CD14-positive monocyte (primary cell): ENCODE measurements at regions of chr18 and their contacts with region 1.

Region 1: GRCh38 chr18:35143622-35144596 is 96.9 kb upstream of the ZNF397 start:
- DNase-seq: peak in 2 of 3 donors; percentile 25 to 26
- H3K4me3 ChIP-seq: no peak overlapping the region
- H3K4me3 Mint-ChIP-seq: no peak overlapping the region
- H3K27ac ChIP-seq: no peak overlapping the region
- H3K27ac Mint-ChIP-seq: no peak overlapping the region
- H3K4me1 ChIP-seq: peaks cover 3 to 4% of the 10 kb centered on the region in 2 donors
- H3K4me1 Mint-ChIP-seq: peaks cover 11% of the 10 kb centered on the region
- H3K27me3 ChIP-seq: no peaks in the 10 kb centered on the region
- H3K27me3 Mint-ChIP-seq: no peaks in the 10 kb centered on the region
- CTCF ChIP-seq: peak; percentile 50

Region 2: DNA sequence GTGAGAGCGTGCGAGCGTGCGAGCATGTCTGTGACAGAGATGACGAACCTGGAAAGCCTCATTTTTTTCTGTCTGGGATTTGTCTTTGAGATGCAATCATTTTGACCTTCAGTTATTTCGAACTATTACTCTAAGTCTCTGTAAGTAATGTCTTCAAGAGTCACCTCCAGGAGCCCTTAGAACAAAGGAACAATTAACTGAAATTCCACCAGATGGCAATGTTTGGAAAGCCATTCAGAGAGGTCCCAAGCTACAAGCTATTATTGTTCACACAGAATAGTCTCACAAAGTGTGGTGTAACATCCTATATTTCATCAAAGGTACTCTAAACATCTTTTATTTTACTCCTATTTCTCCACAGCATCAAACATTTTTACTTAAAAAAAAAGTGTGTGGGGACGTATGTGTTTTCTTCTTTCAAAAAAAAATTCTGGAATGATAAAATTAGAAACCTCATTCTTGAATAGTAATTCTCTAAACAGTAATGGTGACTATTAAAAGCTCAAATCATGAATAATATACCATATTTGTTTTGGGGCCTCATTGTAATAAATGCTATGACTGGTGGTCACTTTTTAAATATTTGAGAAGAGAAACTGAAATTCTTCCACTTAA is 137.8 kb before region 1 on chr18:
- intact Hi-C with region 1: loop called (anchors 2 to 10 kb)
- DNase-seq: peak; percentile 37 to 68 (median 58)
- H3K4me3 ChIP-seq: no peak overlapping the region
- H3K4me3 Mint-ChIP-seq: no peak overlapping the region
- H3K27ac ChIP-seq: no peak overlapping the region
- H3K27ac Mint-ChIP-seq: no peak overlapping the region
- H3K4me1 ChIP-seq: no peaks in the 10 kb centered on the region
- H3K4me1 Mint-ChIP-seq: peaks cover 1% of the 10 kb centered on the region
- H3K27me3 ChIP-seq: no peaks in the 10 kb centered on the region
- H3K27me3 Mint-ChIP-seq: no peaks in the 10 kb centered on the region
- CTCF ChIP-seq: peak; percentile 77

Region 3: GRCh38 chr18:35231052-35231451 is 87.1 kb after region 1 on chr18:
- intact Hi-C with region 1: no loop called
- DNase-seq: peak; percentile 75 to 80 (median 79)
- H3K4me3 ChIP-seq: peak overlapping the region in 1 of 3 experiments; percentile 35
- H3K4me3 Mint-ChIP-seq: peak overlapping the region in 1 of 2 donors; percentile 51
- H3K27ac ChIP-seq: no peak overlapping the region
- H3K27ac Mint-ChIP-seq: peak overlapping the region in 1 of 7 donors; percentile 25
- H3K4me1 ChIP-seq: peaks cover 0 to 4% of the 10 kb centered on the region in 2 donors
- H3K4me1 Mint-ChIP-seq: peaks cover 3% of the 10 kb centered on the region
- H3K27me3 ChIP-seq: no peaks in the 10 kb centered on the region
- H3K27me3 Mint-ChIP-seq: peaks cover 0 to 2% (median 0%) of the 10 kb centered on the region in 3 donors
- CTCF ChIP-seq: peak; percentile 90